ENCODE measurements at regions of chr11 and their contacts with region 1.

Region 1: GRCh38 chr11:117807482-117808327 is 10.7 kb upstream of the DSCAML1 start:
- DNase-seq: peak in 8 of 9 donors; percentile 54 to 76 (median 62)
- ATAC-seq: peak; percentile 76
- H3K4me3 ChIP-seq: no peak overlapping the region
- H3K4me3 Mint-ChIP-seq: peak overlapping the region in 1 of 10 donors; percentile 4
- H3K27ac ChIP-seq: no peak overlapping the region
- H3K27ac Mint-ChIP-seq: peak overlapping the region in 2 of 9 donors; percentile 33 to 64
- H3K4me1 ChIP-seq: peaks cover 0 to 4% of the 10 kb centered on the region in 2 donors
- H3K4me1 Mint-ChIP-seq: peaks cover 6 to 19% (median 9%) of the 10 kb centered on the region in 7 donors
- H3K27me3 ChIP-seq: no peaks in the 10 kb centered on the region
- H3K27me3 Mint-ChIP-seq: peaks cover 0 to 3% (median 0%) of the 10 kb centered on the region in 5 donors

Region 2: GRCh38 chr11:117426269-117426685 is 381.4 kb before region 1 on chr11:
- CTCF ChIA-PET with region 1: interaction called, 6 read pairs
- POLR2A ChIA-PET with region 1: no interaction called
- intact Hi-C with region 1: loop called in 1 of 2 experiments (anchors 2 kb)
- DNase-seq: peak; percentile 7 to 77 (median 48)
- ATAC-seq: peak; percentile 73
- H3K4me3 ChIP-seq: no peak overlapping the region
- H3K4me3 Mint-ChIP-seq: peak overlapping the region in 5 of 10 donors; percentile 20 to 53 (median 42)
- H3K27ac ChIP-seq: no peak overlapping the region
- H3K27ac Mint-ChIP-seq: no peak overlapping the region
- H3K4me1 ChIP-seq: no peaks in the 10 kb centered on the region
- H3K4me1 Mint-ChIP-seq: peaks cover 0 to 13% (median 10%) of the 10 kb centered on the region in 7 donors
- H3K27me3 ChIP-seq: no peaks in the 10 kb centered on the region
- H3K27me3 Mint-ChIP-seq: peaks cover 0 to 15% (median 3%) of the 10 kb centered on the region in 5 donors

Region 3: DNA sequence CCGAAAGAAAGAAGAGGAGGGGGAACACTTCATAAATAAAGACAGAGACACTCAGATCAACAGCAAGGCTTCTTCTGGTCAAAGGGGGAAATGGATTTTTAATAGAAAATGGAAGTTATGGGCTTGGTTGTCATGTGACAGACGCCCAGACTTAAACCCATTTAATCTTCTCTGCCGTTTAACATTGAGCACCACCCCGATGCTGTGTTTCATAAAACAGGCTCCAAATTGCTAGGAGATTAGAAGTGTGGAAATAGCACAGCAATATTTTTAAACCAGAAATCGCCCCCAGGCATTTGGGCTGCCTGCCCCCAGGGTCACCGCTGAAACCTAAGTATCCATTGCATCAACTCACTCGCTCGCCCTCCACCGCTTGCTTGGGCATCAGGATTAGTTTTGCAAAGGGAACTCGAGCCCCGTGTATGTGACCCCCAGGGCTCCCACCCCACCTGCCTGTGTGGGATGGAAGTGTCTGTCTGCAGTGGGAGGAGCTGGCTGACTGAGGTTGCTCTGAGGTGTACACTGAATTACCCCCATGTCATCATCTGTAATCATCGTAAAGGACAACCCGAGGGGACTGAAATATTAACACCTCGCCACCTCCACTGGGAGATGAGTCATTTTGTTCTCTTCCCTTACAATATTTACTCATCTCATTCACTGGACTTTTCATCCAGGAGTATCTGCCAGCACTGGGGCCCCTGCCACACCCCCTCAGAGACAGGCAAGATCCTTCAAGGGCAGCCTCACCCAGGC is 21.4 kb before region 1 on chr11:
- CTCF ChIA-PET with region 1: no interaction called
- POLR2A ChIA-PET with region 1: no interaction called
- intact Hi-C with region 1: no loop called
- DNase-seq: no peak
- ATAC-seq: no peak
- H3K4me3 ChIP-seq: no peak overlapping the region
- H3K4me3 Mint-ChIP-seq: no peak overlapping the region
- H3K27ac ChIP-seq: no peak overlapping the region
- H3K27ac Mint-ChIP-seq: no peak overlapping the region
- H3K4me1 ChIP-seq: no peaks in the 10 kb centered on the region
- H3K4me1 Mint-ChIP-seq: no peaks in the 10 kb centered on the region
- H3K27me3 ChIP-seq: no peaks in the 10 kb centered on the region
- H3K27me3 Mint-ChIP-seq: peaks cover 19 to 61% (median 30%) of the 10 kb centered on the region in 5 donors

Region 4: DNA sequence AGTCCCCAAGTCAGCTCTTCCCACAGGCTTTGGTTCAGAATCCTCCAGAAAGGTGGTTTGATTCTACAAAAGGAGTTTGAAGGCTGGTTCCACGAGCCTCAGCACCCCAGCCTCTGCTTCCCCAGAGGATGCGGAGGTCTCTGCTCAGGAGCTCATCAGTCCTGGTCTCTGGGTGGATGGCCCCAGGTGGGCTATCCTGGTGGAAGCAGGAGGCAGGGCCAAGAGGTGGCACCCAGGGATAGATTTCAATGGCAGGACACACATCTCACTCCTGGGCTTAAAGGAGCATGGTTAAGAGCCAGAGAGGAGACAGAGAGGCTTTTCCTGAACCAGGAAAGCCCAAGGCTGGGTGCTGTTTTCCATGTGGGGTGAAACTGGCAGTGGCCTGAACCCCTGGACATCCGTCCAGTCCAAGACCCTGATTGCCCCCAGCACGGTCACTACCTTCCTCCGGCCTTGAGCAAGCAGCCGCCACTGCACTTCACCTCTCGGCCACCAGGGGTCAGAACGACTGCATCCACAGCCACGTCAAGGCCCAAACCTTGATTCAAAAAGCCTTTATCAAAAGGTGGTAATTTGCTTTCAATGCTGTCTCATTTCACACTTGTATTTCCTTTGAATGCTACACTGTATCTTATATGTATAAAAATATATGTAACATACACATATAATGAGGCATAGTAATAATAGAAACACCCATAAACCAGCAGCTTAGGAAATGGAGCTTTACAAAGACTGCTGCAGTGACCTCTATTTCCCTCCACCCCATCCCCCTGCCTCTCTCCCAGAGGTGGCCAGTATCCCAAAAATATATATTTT is 36.2 kb after region 1 on chr11:
- CTCF ChIA-PET with region 1: interaction called, 25 read pairs
- POLR2A ChIA-PET with region 1: no interaction called
- intact Hi-C with region 1: loop called in 1 of 2 experiments (anchors 1 kb)
- DNase-seq: peak; percentile 63 to 84 (median 72)
- ATAC-seq: peak; percentile 78
- H3K4me3 ChIP-seq: no peak overlapping the region
- H3K4me3 Mint-ChIP-seq: no peak overlapping the region
- H3K27ac ChIP-seq: no peak overlapping the region
- H3K27ac Mint-ChIP-seq: peak overlapping the region in 2 of 9 donors; percentile 46 to 51
- H3K4me1 ChIP-seq: peaks cover 6 to 9% of the 10 kb centered on the region in 2 donors
- H3K4me1 Mint-ChIP-seq: peaks cover 0 to 10% (median 0%) of the 10 kb centered on the region in 7 donors
- H3K27me3 ChIP-seq: no peaks in the 10 kb centered on the region
- H3K27me3 Mint-ChIP-seq: peaks cover 0 to 32% (median 0%) of the 10 kb centered on the region in 5 donors

Region 5: GRCh38 chr11:117907251-117907981 is 99.7 kb after region 1 on chr11:
- CTCF ChIA-PET with region 1: interaction called, 3 read pairs
- POLR2A ChIA-PET with region 1: no interaction called
- intact Hi-C with region 1: loop called in 1 of 2 experiments (anchors 1 kb)
- DNase-seq: peak in 5 of 9 donors; percentile 11 to 81 (median 28)
- ATAC-seq: peak; percentile 99
- H3K4me3 ChIP-seq: no peak overlapping the region
- H3K4me3 Mint-ChIP-seq: peak overlapping the region in 1 of 10 donors; percentile 63
- H3K27ac ChIP-seq: no peak overlapping the region
- H3K27ac Mint-ChIP-seq: peak overlapping the region in 2 of 9 donors; percentile 3 to 83
- H3K4me1 ChIP-seq: no peaks in the 10 kb centered on the region
- H3K4me1 Mint-ChIP-seq: peaks cover 0 to 19% (median 0%) of the 10 kb centered on the region in 7 donors
- H3K27me3 ChIP-seq: no peaks in the 10 kb centered on the region
- H3K27me3 Mint-ChIP-seq: peaks cover 0 to 2% (median 0%) of the 10 kb centered on the region in 5 donors

Region 6: GRCh38 chr11:118171269-118172062 is 363.8 kb after region 1 on chr11:
- CTCF ChIA-PET with region 1: interaction called, 13 read pairs
- POLR2A ChIA-PET with region 1: no interaction called
- intact Hi-C with region 1: loop called (anchors 1 kb)
- DNase-seq: peak; percentile 40 to 77 (median 64)
- ATAC-seq: peak; percentile 93
- H3K4me3 ChIP-seq: no peak overlapping the region
- H3K4me3 Mint-ChIP-seq: peak overlapping the region in 1 of 10 donors; percentile 37
- H3K27ac ChIP-seq: no peak overlapping the region
- H3K27ac Mint-ChIP-seq: no peak overlapping the region
- H3K4me1 ChIP-seq: peaks cover 0 to 5% of the 10 kb centered on the region in 2 donors
- H3K4me1 Mint-ChIP-seq: peaks cover 0 to 9% (median 2%) of the 10 kb centered on the region in 7 donors
- H3K27me3 ChIP-seq: no peaks in the 10 kb centered on the region
- H3K27me3 Mint-ChIP-seq: peaks cover 0 to 35% (median 6%) of the 10 kb centered on the region in 5 donors

Measured in naive thymus-derived CD4-positive, alpha-beta T cell (primary cell).